ENCODE measurements at regions of chr5 and their contacts with region 1.

Region 1: DNA sequence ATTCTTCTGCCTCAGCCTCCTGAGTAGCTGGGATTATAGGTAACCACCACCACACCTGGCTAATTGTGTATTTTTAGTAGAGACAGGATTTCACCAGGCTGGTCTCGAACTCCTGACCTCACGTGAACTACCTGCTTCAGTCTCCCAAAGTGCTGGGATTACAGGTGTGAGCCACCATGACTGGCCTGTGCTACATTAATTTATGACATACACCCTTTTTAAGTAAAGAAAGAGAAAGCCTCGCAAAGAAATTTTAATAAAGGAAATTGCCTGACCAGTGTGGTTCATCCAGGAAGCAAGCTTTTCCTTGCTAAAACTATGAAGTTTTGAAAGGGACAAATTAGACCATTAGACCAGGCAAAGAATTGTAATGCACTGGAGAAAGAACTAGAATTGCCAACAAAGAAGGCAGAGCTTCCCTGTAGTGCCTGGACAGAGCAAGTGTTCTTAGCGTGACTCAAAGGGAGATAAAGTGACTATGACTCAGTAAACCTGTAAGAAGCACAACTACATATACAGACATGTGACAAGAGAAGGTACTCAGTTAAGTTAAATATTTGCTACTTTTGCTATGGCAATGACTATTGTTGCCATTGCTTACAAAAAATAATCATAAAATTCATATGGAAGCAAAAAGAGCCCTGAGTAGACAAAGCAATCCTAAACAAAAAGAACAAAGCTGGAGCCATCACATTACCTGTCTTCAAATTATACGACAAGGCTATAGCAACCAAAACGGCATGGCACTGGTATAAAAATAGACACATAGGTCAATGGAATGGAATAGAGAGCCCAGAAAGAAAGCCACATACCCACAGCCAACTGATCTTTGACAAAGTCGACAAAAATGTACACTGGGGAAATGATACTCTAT is 54.6 kb downstream of the FYB1 start:
- DNase-seq: peak in 2 of 9 experiments; percentile 56 to 70
- ATAC-seq: peak; percentile 73
- H3K4me3 ChIP-seq: no peak overlapping the region
- H3K4me3 Mint-ChIP-seq: peak overlapping the region; percentile 55
- H3K27ac ChIP-seq: peak overlapping the region; percentile 9 to 65
- H3K27ac Mint-ChIP-seq: peak overlapping the region; percentile 91
- H3K4me1 ChIP-seq: peaks cover 93% of the 10 kb centered on the region
- H3K4me1 Mint-ChIP-seq: peaks cover 90% of the 10 kb centered on the region
- H3K27me3 ChIP-seq: no peaks in the 10 kb centered on the region
- H3K27me3 Mint-ChIP-seq: no peaks in the 10 kb centered on the region
- CTCF ChIP-seq: no peak

Region 2: DNA sequence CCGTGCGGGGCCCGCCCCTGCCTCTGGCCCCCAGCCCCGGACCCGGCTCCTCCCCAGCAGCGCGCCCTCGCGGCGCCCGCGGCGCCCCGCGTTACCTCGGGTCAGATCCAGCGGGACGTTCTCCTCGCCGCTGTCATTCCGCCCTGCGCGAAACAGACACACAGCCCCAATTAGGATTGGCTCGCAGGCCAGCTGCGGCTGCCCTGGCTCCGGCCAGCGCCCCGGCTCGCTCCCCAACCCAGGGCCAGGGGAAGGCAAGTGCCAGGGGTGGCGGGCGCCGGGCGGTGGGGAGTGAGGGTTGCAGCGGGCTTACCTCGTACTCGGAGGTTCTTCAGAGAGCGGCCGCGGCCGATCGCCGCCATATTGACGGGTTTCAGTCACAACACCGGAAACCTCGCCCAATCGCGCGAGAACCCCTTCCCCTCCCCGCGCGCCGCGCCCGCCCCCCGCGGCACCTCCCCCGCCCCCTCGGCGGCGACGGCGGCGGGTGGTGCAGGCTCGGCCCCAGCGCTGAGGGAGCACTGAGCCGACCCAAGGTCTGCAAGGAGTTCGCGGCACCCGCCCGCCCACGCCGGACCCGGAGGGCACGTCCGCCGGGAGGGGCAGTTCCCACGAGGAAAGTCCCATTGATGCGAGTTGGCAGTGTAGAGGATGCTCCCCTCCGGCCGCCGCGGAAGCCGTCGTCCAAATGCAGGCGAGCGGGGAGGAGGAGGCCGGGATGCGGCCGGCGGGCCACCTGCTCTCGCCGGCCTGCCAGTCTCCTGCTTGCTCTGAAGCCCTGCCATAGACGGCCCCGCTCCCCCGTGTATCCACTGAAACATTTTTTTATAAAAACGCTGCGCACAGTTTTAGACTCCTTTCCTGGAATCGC is 90.5 kb before region 1 on chr5 and contains the start of gene RICTOR:
- CTCF ChIA-PET with region 1: no interaction called
- POLR2A ChIA-PET with region 1: no interaction called
- intact Hi-C with region 1: no loop called
- DNase-seq: peak; percentile 85 to 94 (median 91)
- ATAC-seq: peak; percentile 71
- H3K4me3 ChIP-seq: peak within 1 kb of the TSS; percentile 81 to 95
- H3K4me3 Mint-ChIP-seq: peak within 1 kb of the TSS; percentile 97
- H3K27ac ChIP-seq: peak within 1 kb of the TSS; percentile 92 to 94
- H3K27ac Mint-ChIP-seq: peak within 1 kb of the TSS; percentile 96
- H3K4me1 ChIP-seq: peaks cover 36% of the 10 kb centered on the region
- H3K4me1 Mint-ChIP-seq: peaks cover 46% of the 10 kb centered on the region
- H3K27me3 ChIP-seq: peaks cover 10 to 11% of the 10 kb centered on the region in 2 experiments
- H3K27me3 Mint-ChIP-seq: peaks cover 25% of the 10 kb centered on the region
- CTCF ChIP-seq: no peak
- total RNA-seq, gene RICTOR: 116 to 128 TPM

Region 3: DNA sequence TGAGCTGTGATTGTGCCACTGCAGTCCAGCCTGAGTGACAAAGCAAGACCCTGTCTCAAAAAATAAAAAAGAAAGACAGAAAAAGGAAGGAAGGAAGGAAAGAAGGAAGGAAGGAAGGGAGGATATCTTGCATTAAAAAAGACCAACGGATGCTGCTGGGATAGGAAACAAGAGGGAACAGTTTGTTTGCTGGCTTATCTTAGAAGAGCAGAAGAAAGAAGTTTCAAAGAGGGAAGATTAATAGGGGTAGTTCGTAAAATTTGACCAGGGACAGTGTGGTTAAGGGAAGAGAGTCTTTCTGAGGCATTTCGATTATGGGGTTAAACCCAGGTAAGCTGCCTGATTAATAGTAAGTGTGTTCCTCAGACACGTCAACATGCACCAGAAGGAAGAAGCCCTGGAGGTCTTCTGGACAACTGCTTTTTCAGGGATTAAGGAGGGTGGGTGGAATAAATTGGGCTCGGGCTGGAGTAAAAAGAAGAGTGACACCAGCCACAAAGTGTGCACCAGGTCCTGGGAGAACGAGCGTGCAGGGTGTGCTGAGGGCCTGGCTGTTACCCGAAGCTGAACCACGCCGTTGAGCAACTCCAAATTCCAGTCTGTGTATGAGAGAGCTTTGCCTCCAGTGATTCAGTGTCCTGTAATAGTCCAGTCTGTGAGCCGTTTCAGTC is 29.8 kb after region 1 on chr5:
- CTCF ChIA-PET with region 1: interaction called, 16 read pairs
- POLR2A ChIA-PET with region 1: interaction called, 5 read pairs
- intact Hi-C with region 1: no loop called
- DNase-seq: peak in 1 of 9 experiments; percentile 41
- ATAC-seq: no peak
- H3K4me3 ChIP-seq: peak overlapping the region; percentile 12 to 28
- H3K4me3 Mint-ChIP-seq: peak overlapping the region; percentile 77
- H3K27ac ChIP-seq: peak overlapping the region; percentile 41 to 88
- H3K27ac Mint-ChIP-seq: peak overlapping the region; percentile 94
- H3K4me1 ChIP-seq: peaks cover 72% of the 10 kb centered on the region
- H3K4me1 Mint-ChIP-seq: peaks cover 76% of the 10 kb centered on the region
- H3K27me3 ChIP-seq: no peaks in the 10 kb centered on the region
- H3K27me3 Mint-ChIP-seq: no peaks in the 10 kb centered on the region
- CTCF ChIP-seq: no peak

Region 4: GRCh38 chr5:39376293-39376714 is 211.5 kb after region 1 on chr5:
- CTCF ChIA-PET with region 1: no interaction called
- POLR2A ChIA-PET with region 1: no interaction called
- intact Hi-C with region 1: no loop called
- DNase-seq: peak in 3 of 9 experiments; percentile 14 to 60 (median 54)
- ATAC-seq: no peak
- H3K4me3 ChIP-seq: no peak overlapping the region
- H3K4me3 Mint-ChIP-seq: no peak overlapping the region
- H3K27ac ChIP-seq: no peak overlapping the region
- H3K27ac Mint-ChIP-seq: no peak overlapping the region
- H3K4me1 ChIP-seq: no peaks in the 10 kb centered on the region
- H3K4me1 Mint-ChIP-seq: peaks cover 2% of the 10 kb centered on the region
- H3K27me3 ChIP-seq: no peaks in the 10 kb centered on the region
- H3K27me3 Mint-ChIP-seq: peaks cover 4% of the 10 kb centered on the region
- CTCF ChIP-seq: peak; percentile 61

Measured in CD8-positive, alpha-beta T cell (primary cell).